ENCODE measurements at regions of chr9 and their contacts with region 1.

Region 1: DNA sequence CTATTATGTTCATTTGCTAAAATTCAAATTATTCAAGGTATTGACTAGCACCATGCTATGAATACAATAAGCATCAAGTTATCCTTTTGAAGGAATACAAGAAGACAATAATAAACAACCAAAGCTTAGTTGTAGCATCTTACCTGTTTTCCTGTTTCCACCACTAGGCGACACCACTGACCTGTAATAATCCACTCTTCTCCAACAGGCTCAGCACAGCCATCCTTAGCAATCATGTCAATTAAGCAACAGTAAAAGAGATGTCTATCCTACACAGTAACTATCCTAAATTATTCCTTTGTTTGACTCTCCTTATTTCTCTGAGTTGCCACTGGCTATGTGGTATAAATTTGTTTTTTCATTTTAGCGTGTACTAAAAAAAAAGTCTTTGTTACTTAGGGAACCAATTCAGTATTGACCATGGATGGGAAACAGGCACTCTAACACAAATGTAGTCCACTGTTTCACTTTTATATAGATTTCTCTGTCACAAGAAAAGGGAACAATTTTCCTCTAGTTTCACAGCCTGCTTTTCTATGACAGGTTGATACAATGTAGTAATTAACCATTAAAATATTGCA is 46.2 kb downstream of the PCA3 start:
- DNase-seq: peak in 1 of 2 donors; percentile 78
- H3K4me3 ChIP-seq: no peak overlapping the region
- H3K27ac ChIP-seq: no peak overlapping the region
- H3K4me1 ChIP-seq: peaks cover 0 to 6% (median 0%) of the 10 kb centered on the region in 4 donors
- H3K27me3 ChIP-seq: peaks cover 0 to 13% (median 0%) of the 10 kb centered on the region in 3 donors
- CTCF ChIP-seq: peak in 5 of 7 experiments; percentile 44 to 78 (median 69)
- EP300 ChIP-seq: no peak
- POLR2A ChIP-seq: no peak

Region 2: DNA sequence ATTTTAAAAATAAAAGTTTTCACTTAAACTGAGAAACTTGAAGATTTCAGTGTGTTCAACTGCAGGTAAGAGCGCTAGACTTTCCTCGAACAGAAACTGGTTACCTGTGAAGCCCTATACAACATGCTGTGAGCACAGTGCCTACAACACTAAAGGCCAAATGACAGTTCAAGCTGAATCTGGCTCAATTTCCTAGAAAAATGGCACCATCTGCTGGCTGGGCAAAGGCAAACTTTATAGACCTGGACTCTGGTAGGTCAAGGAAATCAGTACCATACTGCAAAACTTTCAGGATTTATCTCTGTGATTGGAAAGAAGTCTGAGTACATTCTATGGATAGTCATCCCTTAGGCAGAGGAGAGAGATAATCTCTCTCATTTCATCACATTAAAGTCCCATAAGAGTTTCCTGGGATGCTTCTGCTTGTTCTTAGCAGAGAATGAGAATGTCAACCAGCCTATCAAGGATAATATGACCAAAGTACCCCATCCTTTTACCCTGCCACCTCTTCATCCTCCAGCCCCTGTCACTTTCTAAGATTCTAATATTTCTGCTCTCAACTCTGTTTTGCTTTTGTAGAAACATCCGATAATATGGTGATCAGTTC is 177.2 kb after region 1 on chr9:
- intact Hi-C with region 1: loop called (anchors 5 kb)
- DNase-seq: peak in 1 of 2 donors; percentile 38
- H3K4me3 ChIP-seq: no peak overlapping the region
- H3K27ac ChIP-seq: no peak overlapping the region
- H3K4me1 ChIP-seq: no peaks in the 10 kb centered on the region
- H3K27me3 ChIP-seq: no peaks in the 10 kb centered on the region
- CTCF ChIP-seq: peak in 2 of 7 experiments; percentile 24 to 33
- EP300 ChIP-seq: no peak
- POLR2A ChIP-seq: no peak

Region 3: DNA sequence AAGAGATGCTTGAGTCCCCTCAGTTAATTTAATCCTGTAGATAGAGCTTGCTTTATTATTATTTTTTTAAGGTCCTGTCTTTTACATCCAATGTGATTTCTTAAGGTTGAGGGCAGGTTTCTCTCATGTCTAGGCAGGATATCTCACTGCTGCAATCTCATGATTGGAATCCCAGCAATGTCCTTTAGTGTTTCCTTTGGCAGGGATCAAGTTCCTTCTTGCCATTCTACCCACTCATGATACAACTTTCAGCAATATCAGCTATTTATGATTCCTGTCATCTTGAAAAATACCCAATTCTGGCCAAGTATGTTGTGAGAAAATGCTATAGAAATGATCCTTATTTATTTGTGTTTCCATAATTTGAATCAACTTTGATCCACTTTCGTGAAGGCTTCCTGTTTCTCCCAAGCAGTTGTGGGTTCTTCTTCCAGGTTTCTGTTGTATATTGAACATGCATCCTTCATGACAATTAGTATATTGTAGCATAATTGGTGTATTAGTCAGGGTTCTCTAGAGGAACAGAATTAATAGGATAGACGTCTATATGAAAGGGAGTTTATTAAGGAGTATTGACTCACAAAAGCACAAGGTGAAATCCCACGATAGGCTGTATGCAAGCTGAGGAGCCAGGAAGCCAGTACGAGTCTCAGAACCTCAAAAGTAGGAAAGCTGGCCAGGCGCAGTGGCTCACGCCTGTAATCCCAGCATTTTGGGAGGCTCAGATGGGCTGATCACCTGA is 348.5 kb after region 1 on chr9:
- intact Hi-C with region 1: loop called (anchors 10 kb)
- DNase-seq: no peak
- H3K4me3 ChIP-seq: no peak overlapping the region
- H3K27ac ChIP-seq: no peak overlapping the region
- H3K4me1 ChIP-seq: peaks cover 0 to 3% (median 0%) of the 10 kb centered on the region in 4 donors
- H3K27me3 ChIP-seq: peaks cover 0 to 4% (median 0%) of the 10 kb centered on the region in 3 donors
- CTCF ChIP-seq: no peak
- EP300 ChIP-seq: no peak
- POLR2A ChIP-seq: no peak